GM13977 (cell line): ENCODE measurements at regions of chrX and their contacts with region 1.

Region 1: GRCh38 chrX:24241822-24242648 is 71.8 kb downstream of the SUPT20HL2 start:
- DNase-seq: peak; percentile 52
- CTCF ChIP-seq: peak; percentile 53

Region 2: DNA sequence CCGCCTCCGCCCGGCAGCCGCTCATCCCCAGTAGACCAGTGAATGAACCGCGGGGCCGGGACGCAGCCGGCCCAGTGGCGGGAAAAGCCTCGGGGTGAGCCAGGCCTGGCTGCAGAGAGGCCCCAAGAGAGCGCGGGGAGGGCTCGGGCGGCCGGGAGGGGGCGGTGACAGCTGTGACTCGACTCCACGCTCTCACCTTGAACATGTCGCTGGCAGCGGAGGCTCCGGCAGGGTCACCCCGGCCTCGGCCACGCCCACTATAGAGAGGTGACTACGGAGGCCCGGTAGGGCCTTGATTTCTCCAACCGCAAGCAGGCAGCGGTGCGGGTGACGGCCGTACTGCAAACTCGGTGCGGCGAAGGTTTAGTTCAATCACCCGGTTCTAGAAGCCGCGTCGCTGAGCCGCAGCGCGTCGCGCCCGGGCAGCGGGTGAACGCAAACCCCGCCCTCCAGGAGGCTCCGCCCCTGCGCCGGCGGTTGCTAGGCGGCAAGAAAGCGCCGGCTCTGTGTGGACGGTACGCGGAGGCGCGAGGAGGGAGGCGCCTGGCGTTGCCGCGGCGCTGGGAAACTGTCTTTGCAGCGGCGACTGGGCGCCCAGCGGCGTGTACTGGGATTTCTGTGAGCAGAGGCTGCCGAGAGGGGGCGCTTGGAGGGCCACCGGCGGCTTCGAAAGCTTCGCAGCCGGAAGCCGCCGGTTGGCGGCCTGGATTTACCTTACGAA is 334.4 kb before region 1 on chrX and contains the starts of genes APOO and CXorf58:
- in situ Hi-C with region 1: loop called (anchors 25 kb)
- DNase-seq: peak; percentile 91
- CTCF ChIP-seq: peak; percentile 70

Region 3: GRCh38 chrX:24081661-24082264 is 160.3 kb before region 1 on chrX:
- in situ Hi-C with region 1: loop called (anchors 25 kb)
- DNase-seq: no peak
- CTCF ChIP-seq: peak; percentile 67

Region 4: DNA sequence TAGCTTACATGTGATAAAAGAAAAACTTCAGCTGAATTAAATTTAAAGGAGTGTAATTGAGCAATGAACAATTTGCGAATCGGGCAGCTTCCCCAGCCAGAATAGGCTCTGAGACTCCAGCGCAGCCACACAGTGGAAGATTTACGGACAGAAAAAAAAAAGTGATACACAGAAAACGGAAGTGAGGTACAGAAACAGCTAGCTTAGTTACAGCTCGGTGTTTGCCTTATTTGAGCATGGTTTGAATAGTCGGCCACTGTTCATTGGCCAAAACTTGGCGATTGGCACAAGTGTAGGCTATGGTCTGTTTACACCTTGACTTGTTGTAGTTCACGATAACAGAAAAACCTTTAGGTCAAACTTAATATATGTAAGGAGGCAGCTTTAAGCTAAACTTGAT is 101.7 kb after region 1 on chrX:
- in situ Hi-C with region 1: no loop called
- DNase-seq: no peak
- CTCF ChIP-seq: no peak